ENCODE measurements at regions of chr17 and their contacts with region 1.

Region 1: DNA sequence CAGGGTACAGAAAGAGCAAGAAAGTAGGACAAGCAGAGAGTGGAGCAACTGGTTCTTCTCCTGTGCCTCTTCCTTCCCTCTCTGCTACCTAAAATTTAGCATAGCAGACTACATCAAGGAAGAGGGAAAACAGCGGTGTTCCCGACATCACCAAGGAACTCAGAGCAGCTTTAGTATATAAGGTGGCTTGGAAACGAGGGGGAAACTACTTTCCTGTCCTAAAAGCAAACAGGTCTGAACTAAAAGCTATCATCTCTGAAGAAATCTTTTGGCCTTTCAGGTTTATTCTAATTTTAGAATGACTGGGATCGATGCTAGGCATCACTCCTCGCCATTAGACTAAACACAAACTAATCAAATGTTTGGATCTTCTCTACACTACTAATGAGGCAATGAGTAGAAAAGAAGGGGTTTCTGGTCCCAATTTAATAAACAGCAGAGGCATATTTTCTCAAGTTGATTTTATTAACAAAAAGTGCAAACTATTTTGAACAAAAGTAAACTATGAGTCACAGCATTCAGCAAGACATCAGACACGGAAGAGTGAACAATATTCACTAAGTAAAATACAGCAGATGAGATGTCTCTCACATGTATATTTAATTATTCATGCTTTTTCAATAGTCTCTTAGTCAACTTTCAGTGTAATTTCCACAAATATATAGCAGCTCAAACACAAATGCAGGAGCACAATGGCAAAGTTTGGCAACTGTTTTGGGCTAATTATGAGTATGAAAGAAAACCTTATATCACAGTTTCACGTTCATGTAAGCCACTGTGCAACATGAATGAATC is 108.7 kb downstream of the TRIM37 start:
- DNase-seq: no peak
- ATAC-seq: no peak
- H3K4me3 ChIP-seq: no peak overlapping the region
- H3K27ac ChIP-seq: peak overlapping the region in 2 of 10 donors; percentile 1 to 63
- H3K4me1 ChIP-seq: peaks cover 0 to 33% (median 0%) of the 10 kb centered on the region in 9 donors
- H3K27me3 ChIP-seq: no peaks in the 10 kb centered on the region
- CTCF ChIP-seq: no peak

Region 2: DNA sequence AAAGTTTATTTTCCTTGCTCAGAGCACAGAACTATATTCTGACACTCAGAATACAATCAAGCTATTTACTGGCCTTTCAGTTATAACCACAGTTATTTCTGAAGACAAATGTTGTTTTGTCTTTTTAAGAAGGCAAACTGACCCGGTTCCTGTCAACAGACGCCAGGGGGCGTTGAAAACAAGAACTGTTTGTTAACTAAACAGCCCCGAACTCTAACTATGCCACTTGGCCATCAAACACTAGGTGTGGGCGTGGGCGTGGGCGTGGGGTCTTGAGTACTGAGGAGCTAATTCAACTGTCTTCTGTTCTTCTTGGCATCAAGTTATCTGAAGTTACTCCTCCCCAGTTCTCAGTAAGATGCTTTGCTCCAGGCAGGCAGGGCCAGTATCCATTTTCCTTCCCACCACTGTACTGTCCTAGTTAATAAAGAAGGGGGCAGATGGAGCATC is 420.3 kb before region 1 on chr17:
- intact Hi-C with region 1: loop called in 3 of 10 experiments (anchors 5 to 10 kb)
- DNase-seq: peak; percentile 23 to 43
- ATAC-seq: peak in 3 of 8 donors; percentile 26 to 53 (median 31)
- H3K4me3 ChIP-seq: no peak overlapping the region
- H3K27ac ChIP-seq: no peak overlapping the region
- H3K4me1 ChIP-seq: peaks cover 0 to 13% (median 0%) of the 10 kb centered on the region in 9 donors
- H3K27me3 ChIP-seq: no peaks in the 10 kb centered on the region
- CTCF ChIP-seq: peak; percentile 21 to 71 (median 64)

Region 3: GRCh38 chr17:58710936-58711775 is 286.8 kb before region 1 on chr17:
- intact Hi-C with region 1: loop called in 2 of 10 experiments (anchors 2 to 10 kb)
- DNase-seq: peak in 1 of 2 donors; percentile 21
- ATAC-seq: no peak
- H3K4me3 ChIP-seq: no peak overlapping the region
- H3K27ac ChIP-seq: no peak overlapping the region
- H3K4me1 ChIP-seq: no peaks in the 10 kb centered on the region
- H3K27me3 ChIP-seq: no peaks in the 10 kb centered on the region
- CTCF ChIP-seq: peak; percentile 40 to 83 (median 74)

Region 4: DNA sequence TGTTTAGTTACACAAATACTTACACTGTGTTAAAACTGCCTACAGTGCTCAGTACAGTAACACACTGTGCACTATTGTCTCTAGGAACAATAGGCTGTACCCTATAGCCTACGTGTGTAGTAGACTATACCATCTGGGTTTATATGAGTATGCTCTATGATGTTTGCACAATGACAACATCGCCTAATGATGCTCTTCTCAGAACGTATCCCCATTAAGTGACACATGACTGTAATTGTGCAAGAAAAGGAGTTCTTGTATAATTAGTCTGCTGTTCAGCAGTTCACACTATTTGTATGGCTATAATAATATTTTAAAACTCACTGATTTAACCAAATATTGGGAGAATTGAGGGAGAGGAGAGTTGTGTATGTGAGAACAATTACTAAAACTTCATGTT is 65.0 kb before region 1 on chr17:
- intact Hi-C with region 1: no loop called
- DNase-seq: no peak
- ATAC-seq: no peak
- H3K4me3 ChIP-seq: no peak overlapping the region
- H3K27ac ChIP-seq: no peak overlapping the region
- H3K4me1 ChIP-seq: no peaks in the 10 kb centered on the region
- H3K27me3 ChIP-seq: no peaks in the 10 kb centered on the region
- CTCF ChIP-seq: no peak